MCF 10A (cell line): ENCODE measurements at regions of chr3 and their contacts with region 1.

Region 1: GRCh38 chr3:121545574-121546455 is at the start of gene POLQ:
- DNase-seq: peak; percentile 96
- H3K4me3 Mint-ChIP-seq: peak within 1 kb of the TSS; percentile 75
- H3K27ac Mint-ChIP-seq: peak within 1 kb of the TSS; percentile 82
- H3K4me1 Mint-ChIP-seq: peaks cover 16% of the 10 kb centered on the region
- H3K27me3 Mint-ChIP-seq: no peaks in the 10 kb centered on the region
- CTCF ChIP-seq: no peak
- total RNA-seq, gene POLQ: 4.1 and 5.8 TPM in 2 replicates

Region 2: DNA sequence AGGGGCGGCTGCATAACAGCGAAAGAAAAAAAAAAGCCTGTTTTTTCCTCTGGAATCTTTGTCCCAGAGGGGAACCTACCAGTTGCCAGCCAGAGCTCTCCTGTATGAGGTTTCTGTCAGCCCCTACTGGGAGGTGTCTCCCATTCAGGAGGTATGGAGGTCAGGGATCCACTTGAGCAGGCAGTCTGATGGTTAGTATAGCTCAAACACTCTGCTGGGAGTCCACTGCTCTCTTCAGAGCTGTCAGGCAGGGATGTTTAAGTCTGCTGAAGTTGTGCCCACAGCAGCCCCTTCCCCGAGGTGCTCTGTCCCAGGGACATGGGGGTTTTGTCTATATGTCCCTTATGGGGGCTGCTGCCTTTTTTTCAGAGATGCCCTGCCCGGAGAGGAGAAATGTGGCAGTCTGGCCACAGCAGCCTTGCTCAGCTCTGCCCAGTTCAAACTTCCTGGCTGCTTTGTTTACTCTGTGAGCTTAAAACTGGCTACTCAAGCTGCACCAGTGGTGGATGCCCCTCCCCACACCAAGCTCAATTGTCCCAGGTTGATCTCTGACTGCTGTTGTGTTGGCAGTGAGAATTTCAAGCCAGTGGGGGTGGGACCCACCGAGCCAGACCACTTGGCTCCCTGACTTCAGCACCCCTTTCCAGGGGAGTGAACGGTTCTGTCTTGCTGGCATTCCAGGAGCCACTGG is 449.0 kb before region 1 on chr3:
- CTCF ChIA-PET with region 1: no interaction called
- POLR2A ChIA-PET with region 1: no interaction called
- intact Hi-C with region 1: no loop called
- DNase-seq: no peak
- H3K4me3 Mint-ChIP-seq: no peak overlapping the region
- H3K27ac Mint-ChIP-seq: no peak overlapping the region
- H3K4me1 Mint-ChIP-seq: no peaks in the 10 kb centered on the region
- H3K27me3 Mint-ChIP-seq: peaks cover 44% of the 10 kb centered on the region
- CTCF ChIP-seq: no peak

Region 3: GRCh38 chr3:121557426-121557934 is 11.7 kb after region 1 on chr3:
- CTCF ChIA-PET with region 1: interaction called, 12 read pairs
- POLR2A ChIA-PET with region 1: no interaction called
- intact Hi-C with region 1: no loop called
- DNase-seq: no peak
- H3K4me3 Mint-ChIP-seq: no peak overlapping the region
- H3K27ac Mint-ChIP-seq: no peak overlapping the region
- H3K4me1 Mint-ChIP-seq: peaks cover 14% of the 10 kb centered on the region
- H3K27me3 Mint-ChIP-seq: no peaks in the 10 kb centered on the region
- CTCF ChIP-seq: no peak

Region 4: GRCh38 chr3:121651684-121652083 is 105.9 kb after region 1 on chr3:
- CTCF ChIA-PET with region 1: interaction called, 27 read pairs
- POLR2A ChIA-PET with region 1: interaction called, 14 read pairs
- intact Hi-C with region 1: no loop called
- DNase-seq: peak; percentile 45
- H3K4me3 Mint-ChIP-seq: no peak overlapping the region
- H3K27ac Mint-ChIP-seq: no peak overlapping the region
- H3K4me1 Mint-ChIP-seq: peaks cover 20% of the 10 kb centered on the region
- H3K27me3 Mint-ChIP-seq: no peaks in the 10 kb centered on the region
- CTCF ChIP-seq: no peak

Region 5: DNA sequence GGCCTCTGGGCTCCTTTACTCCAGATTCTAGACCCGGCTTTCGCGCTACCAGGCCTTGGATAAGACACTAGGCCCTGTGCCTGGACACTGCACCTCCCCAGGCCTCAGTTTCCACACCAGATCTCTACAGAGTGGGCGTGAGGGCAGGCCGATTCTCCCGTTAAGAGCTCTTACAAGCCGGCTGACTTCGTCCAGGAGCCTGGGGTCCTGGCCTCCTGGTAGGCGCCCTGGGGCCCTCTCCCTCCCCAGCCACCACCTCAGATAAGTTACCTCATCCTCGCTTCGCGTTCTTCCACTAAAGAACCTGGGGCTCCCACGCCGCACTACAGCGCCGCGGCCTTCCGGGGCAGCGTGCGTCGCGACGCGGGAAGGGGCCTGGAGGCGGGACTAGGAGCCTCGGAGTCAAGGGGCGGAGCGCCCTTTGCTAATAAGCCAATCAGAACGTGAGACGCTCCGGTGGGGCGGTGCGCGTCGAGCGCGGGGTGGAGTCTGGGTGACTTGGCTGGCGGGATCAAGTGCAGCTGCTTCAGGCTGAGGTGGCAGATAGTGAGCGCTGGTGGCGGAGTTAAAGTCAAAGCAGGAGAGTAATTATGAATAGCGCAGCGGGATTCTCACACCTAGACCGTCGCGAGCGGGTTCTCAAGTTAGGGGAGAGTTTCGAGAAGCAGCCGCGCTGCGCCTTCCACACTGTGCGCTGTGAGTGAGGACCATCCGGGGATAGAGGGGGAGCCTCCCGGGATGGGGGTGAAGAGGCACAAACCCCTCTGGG is 289.1 kb after region 1 on chr3 and contains the starts of genes EAF2 and IQCB1:
- CTCF ChIA-PET with region 1: interaction called, 3 read pairs
- POLR2A ChIA-PET with region 1: no interaction called
- intact Hi-C with region 1: loop called (anchors 10 kb)
- DNase-seq: peak; percentile 96
- H3K4me3 Mint-ChIP-seq: peak within 1 kb of the TSS; percentile 89
- H3K27ac Mint-ChIP-seq: peak within 1 kb of the TSS; percentile 84
- H3K4me1 Mint-ChIP-seq: peaks cover 12% of the 10 kb centered on the region
- H3K27me3 Mint-ChIP-seq: no peaks in the 10 kb centered on the region
- CTCF ChIP-seq: no peak
- total RNA-seq, gene EAF2: 2.5 and 2.7 TPM in 2 replicates
- total RNA-seq, gene IQCB1: 33.5 and 34.6 TPM in 2 replicates

Region 6: GRCh38 chr3:121995161-121996137 is 449.6 kb after region 1 on chr3:
- CTCF ChIA-PET with region 1: interaction called, 5 read pairs
- POLR2A ChIA-PET with region 1: no interaction called
- intact Hi-C with region 1: loop called (anchors 1 kb)
- DNase-seq: peak; percentile 79
- H3K4me3 Mint-ChIP-seq: no peak overlapping the region
- H3K27ac Mint-ChIP-seq: peak overlapping the region; percentile 61
- H3K4me1 Mint-ChIP-seq: peaks cover 24% of the 10 kb centered on the region
- H3K27me3 Mint-ChIP-seq: no peaks in the 10 kb centered on the region
- CTCF ChIP-seq: peak; percentile 33

Region 7: GRCh38 chr3:122258757-122259371 is 713.0 kb after region 1 on chr3:
- CTCF ChIA-PET with region 1: interaction called, 7 read pairs
- POLR2A ChIA-PET with region 1: interaction called, 3 read pairs
- intact Hi-C with region 1: loop called (anchors 1 kb)
- DNase-seq: peak; percentile 74
- H3K4me3 Mint-ChIP-seq: no peak overlapping the region
- H3K27ac Mint-ChIP-seq: no peak overlapping the region
- H3K4me1 Mint-ChIP-seq: no peaks in the 10 kb centered on the region
- H3K27me3 Mint-ChIP-seq: no peaks in the 10 kb centered on the region
- CTCF ChIP-seq: peak; percentile 72